CD8-positive, alpha-beta T cell (primary cell): ENCODE measurements at regions of chrX and their contacts with region 1.

Region 1: GRCh38 chrX:130902783-130903613 is at the start of gene ENOX2:
- DNase-seq: peak; percentile 50 to 94 (median 78)
- ATAC-seq: peak; percentile 95
- H3K4me3 ChIP-seq: peak within 1 kb of the TSS; percentile 84 to 94
- H3K4me3 Mint-ChIP-seq: no peak within 1 kb of the TSS
- H3K27ac ChIP-seq: peak within 1 kb of the TSS; percentile 60 to 87
- H3K27ac Mint-ChIP-seq: peak within 1 kb of the TSS; percentile 70
- H3K4me1 ChIP-seq: no peaks in the 10 kb centered on the region
- H3K4me1 Mint-ChIP-seq: peaks cover 13% of the 10 kb centered on the region
- H3K27me3 ChIP-seq: no peaks in the 10 kb centered on the region
- H3K27me3 Mint-ChIP-seq: no peaks in the 10 kb centered on the region
- CTCF ChIP-seq: no peak
- total RNA-seq, gene ENOX2: 4.0 to 4.6 TPM

Region 2: DNA sequence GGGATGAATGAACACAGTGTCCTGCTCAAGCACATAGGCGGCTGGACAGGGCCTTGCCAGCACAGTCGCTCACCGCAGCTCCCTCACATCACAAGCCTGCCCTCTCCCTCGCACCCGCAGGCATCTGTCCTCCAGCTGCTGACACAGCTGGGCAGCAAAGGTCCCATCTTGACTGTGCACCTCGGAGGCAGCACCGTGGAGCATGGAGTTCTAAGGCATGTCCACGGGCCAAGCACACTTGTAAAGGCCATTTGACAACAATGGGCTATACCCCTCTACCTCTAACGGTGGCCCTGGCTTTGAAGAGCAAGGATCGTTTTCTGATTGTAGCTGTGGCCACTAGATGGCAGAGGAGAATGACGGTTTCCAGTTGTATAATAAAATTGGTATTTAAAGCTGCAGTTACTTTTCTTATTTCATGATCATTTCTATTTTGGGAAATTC is 1302.0 kb before region 1 on chrX:
- CTCF ChIA-PET with region 1: no interaction called
- POLR2A ChIA-PET with region 1: no interaction called
- intact Hi-C with region 1: loop called in 1 of 2 experiments (anchors 5 kb)
- DNase-seq: peak in 4 of 9 experiments; percentile 4 to 54 (median 28)
- ATAC-seq: no peak
- H3K4me3 ChIP-seq: no peak overlapping the region
- H3K4me3 Mint-ChIP-seq: no peak overlapping the region
- H3K27ac ChIP-seq: no peak overlapping the region
- H3K27ac Mint-ChIP-seq: no peak overlapping the region
- H3K4me1 ChIP-seq: peaks cover 11% of the 10 kb centered on the region
- H3K4me1 Mint-ChIP-seq: peaks cover 21% of the 10 kb centered on the region
- H3K27me3 ChIP-seq: no peaks in the 10 kb centered on the region
- H3K27me3 Mint-ChIP-seq: no peaks in the 10 kb centered on the region
- CTCF ChIP-seq: peak; percentile 35

Region 3: DNA sequence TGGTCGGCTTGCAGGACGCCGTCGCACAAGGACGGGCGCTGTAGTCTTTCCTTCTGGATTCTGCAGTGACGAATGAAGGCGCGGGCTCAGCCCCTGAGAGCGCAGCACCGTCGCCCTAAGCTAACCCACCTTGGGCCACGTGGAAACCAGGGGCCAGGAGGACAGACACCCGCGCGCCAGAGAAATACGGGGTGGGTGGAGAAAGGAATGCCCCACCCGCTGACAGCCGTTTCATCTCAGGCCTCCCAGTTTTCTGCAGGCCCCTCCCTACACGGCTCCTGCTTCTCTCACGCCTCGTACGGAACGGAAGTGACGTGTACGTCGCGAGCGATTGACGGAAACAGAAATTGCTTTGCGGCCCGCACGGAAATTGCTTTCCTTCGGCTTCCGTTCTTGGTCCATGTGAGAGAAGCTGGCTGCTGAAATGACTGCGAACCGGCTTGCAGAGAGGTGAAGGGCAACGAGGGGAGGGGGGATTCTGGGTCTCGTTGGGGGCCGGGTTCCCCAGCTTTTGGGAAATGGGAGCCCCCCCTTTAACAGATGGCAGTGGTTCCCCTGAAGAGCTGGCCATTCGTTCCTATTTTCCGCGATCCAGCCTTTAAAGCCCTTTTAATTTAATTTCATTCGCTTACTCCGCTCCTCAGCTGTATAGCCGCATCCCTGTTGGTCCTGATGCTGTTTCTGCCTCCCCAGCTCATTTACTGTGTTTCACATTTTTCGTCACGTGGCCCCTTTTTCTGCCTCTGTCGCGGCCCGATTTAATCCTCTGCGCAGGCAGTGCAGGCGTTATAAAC is 997.0 kb before region 1 on chrX and contains the start of gene UTP14A:
- CTCF ChIA-PET with region 1: no interaction called
- POLR2A ChIA-PET with region 1: no interaction called
- intact Hi-C with region 1: loop called in 1 of 2 experiments (anchors 2 kb)
- DNase-seq: peak; percentile 53 to 94 (median 83)
- ATAC-seq: peak; percentile 93
- H3K4me3 ChIP-seq: peak within 1 kb of the TSS; percentile 78 to 82
- H3K4me3 Mint-ChIP-seq: peak within 1 kb of the TSS; percentile 90
- H3K27ac ChIP-seq: peak within 1 kb of the TSS; percentile 68 to 70
- H3K27ac Mint-ChIP-seq: peak within 1 kb of the TSS; percentile 88
- H3K4me1 ChIP-seq: peaks cover 5% of the 10 kb centered on the region
- H3K4me1 Mint-ChIP-seq: peaks cover 7% of the 10 kb centered on the region
- H3K27me3 ChIP-seq: no peaks in the 10 kb centered on the region
- H3K27me3 Mint-ChIP-seq: no peaks in the 10 kb centered on the region
- CTCF ChIP-seq: no peak
- total RNA-seq, gene UTP14A: 10.1 to 10.3 TPM

Region 4: GRCh38 chrX:130339408-130340222 is 563.4 kb before region 1 on chrX and contains the start of gene SLC25A14:
- CTCF ChIA-PET with region 1: no interaction called
- POLR2A ChIA-PET with region 1: no interaction called
- intact Hi-C with region 1: loop called (anchors 1 kb)
- DNase-seq: peak; percentile 32 to 86 (median 71)
- ATAC-seq: peak; percentile 88
- H3K4me3 ChIP-seq: peak within 1 kb of the TSS; percentile 60 to 83
- H3K4me3 Mint-ChIP-seq: peak within 1 kb of the TSS; percentile 95
- H3K27ac ChIP-seq: peak within 1 kb of the TSS; percentile 36 to 83
- H3K27ac Mint-ChIP-seq: peak within 1 kb of the TSS; percentile 83
- H3K4me1 ChIP-seq: no peaks in the 10 kb centered on the region
- H3K4me1 Mint-ChIP-seq: peaks cover 20% of the 10 kb centered on the region
- H3K27me3 ChIP-seq: no peaks in the 10 kb centered on the region
- H3K27me3 Mint-ChIP-seq: no peaks in the 10 kb centered on the region
- CTCF ChIP-seq: no peak
- total RNA-seq, gene SLC25A14: 11.9 to 13.4 TPM

Region 5: GRCh38 chrX:131812836-131813825 is 910.1 kb after region 1 on chrX:
- CTCF ChIA-PET with region 1: no interaction called
- POLR2A ChIA-PET with region 1: no interaction called
- intact Hi-C with region 1: loop called in 1 of 2 experiments (anchors 10 kb)
- DNase-seq: peak; percentile 47 to 94 (median 69)
- ATAC-seq: peak; percentile 86
- H3K4me3 ChIP-seq: peak overlapping the region; percentile 45 to 51
- H3K4me3 Mint-ChIP-seq: peak overlapping the region; percentile 84
- H3K27ac ChIP-seq: peak overlapping the region; percentile 79 to 80
- H3K27ac Mint-ChIP-seq: peak overlapping the region; percentile 93
- H3K4me1 ChIP-seq: peaks cover 13% of the 10 kb centered on the region
- H3K4me1 Mint-ChIP-seq: peaks cover 19% of the 10 kb centered on the region
- H3K27me3 ChIP-seq: no peaks in the 10 kb centered on the region
- H3K27me3 Mint-ChIP-seq: no peaks in the 10 kb centered on the region
- CTCF ChIP-seq: peak; percentile 40